Activated T-helper 1 cell treated with anti-CD3 and anti-CD28 coated beads, Interleukin-12 subunit alpha, Interleukin-12 subunit beta, Interleukin-2, Interleukin-4 antibody, amounts not matched to agents 30 ng/mL and 10 ng/mL and 1 ng/mL, durations not matched to agents 14 hours and 24 hours and 36 hours (primary cell): ENCODE measurements at regions of chr6 and their contacts with region 1.

Region 1: GRCh38 chr6:128520436-128521281 is at the start of gene PTPRK:
- DNase-seq: peak; percentile 81
- H3K4me3 Mint-ChIP-seq: peak within 1 kb of the TSS; percentile 93
- H3K27ac Mint-ChIP-seq: peak within 1 kb of the TSS; percentile 86
- H3K4me1 Mint-ChIP-seq: peaks cover 23% of the 10 kb centered on the region
- H3K27me3 Mint-ChIP-seq: peaks cover 76% of the 10 kb centered on the region
- total RNA-seq, gene PTPRK: 3.1 and 3.2 TPM in 2 replicates

Region 2: DNA sequence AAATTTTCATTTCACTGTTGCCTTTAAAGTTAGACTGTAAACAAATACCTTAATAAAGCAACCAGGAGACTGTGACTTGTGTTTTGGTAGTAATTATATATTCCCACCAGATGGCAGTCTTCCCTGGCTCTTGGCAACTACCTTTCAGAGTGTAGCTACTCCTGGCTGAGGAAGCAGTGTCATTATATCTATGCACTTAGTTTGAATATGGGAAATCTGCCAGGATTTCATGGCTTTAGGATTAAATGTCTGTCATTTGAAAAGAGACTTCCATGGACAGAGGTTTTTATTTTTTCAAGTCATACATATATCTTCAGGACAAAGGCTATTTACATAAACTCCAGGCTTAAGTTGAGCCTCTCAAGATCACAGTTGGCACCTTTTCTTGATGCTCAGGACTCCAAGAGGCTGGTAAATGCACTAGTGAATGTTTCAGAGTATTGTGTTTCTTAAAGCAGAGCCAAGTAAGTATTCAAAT is 783.6 kb before region 1 on chr6:
- intact Hi-C with region 1: loop called (anchors 1 kb)
- DNase-seq: peak; percentile 4
- H3K4me3 Mint-ChIP-seq: no peak overlapping the region
- H3K27ac Mint-ChIP-seq: peak overlapping the region; percentile 29
- H3K4me1 Mint-ChIP-seq: peaks cover 15% of the 10 kb centered on the region
- H3K27me3 Mint-ChIP-seq: no peaks in the 10 kb centered on the region

Region 3: GRCh38 chr6:127900935-127901334 is 619.7 kb before region 1 on chr6 and contains the start of gene THEMIS:
- intact Hi-C with region 1: loop called (anchors 2 kb)
- DNase-seq: peak; percentile 43
- H3K4me3 Mint-ChIP-seq: peak within 1 kb of the TSS; percentile 91
- H3K27ac Mint-ChIP-seq: peak within 1 kb of the TSS; percentile 96
- H3K4me1 Mint-ChIP-seq: peaks cover 66% of the 10 kb centered on the region
- H3K27me3 Mint-ChIP-seq: no peaks in the 10 kb centered on the region
- total RNA-seq, gene THEMIS: 10.6 and 11.3 TPM in 2 replicates

Region 4: DNA sequence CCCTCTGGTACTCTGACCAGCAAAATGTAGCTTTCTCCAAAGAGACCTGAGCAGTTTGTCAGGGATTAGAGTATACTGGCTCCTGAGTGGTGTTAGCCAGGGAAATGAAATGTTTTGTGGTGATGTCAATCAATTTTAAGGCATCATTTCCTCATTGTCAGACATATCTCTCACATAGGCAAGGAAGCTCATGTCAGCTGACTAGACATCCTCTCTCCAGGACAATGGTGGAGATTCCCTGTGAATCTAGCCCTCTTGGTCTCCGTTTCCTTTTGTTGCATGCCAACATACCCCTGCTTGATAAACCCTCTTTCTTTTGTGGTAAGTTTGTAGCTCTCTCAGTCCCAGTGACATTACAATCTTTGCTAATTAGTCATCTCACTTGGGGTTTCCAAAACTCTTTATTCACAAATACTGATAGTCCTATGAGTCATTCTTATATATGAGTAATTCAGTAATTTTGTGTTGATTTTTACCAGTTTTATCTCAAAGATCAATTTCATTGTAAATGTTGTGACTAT is 135.4 kb after region 1 on chr6:
- intact Hi-C with region 1: loop called (anchors 1 kb)
- DNase-seq: no peak
- H3K4me3 Mint-ChIP-seq: no peak overlapping the region
- H3K27ac Mint-ChIP-seq: peak overlapping the region; percentile 25
- H3K4me1 Mint-ChIP-seq: no peaks in the 10 kb centered on the region
- H3K27me3 Mint-ChIP-seq: no peaks in the 10 kb centered on the region

Region 5: DNA sequence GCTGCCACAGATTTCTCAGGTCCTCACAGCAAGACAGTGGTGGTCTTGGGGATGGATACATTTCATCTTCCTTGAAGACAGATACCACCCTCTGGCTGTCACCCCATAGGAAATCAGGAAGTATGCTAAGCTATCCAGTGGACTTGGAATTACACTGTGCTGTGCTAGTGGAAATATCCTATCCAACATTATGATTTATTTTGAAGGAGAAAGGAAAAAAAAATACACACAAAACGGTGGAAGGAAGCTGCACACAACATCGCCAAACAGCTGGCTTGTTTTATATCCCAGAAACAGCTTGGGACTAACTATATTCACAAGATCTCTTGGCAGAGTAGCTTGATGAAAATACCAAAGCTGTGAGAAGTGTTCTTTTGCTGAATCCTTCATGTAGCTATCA is 619.9 kb after region 1 on chr6:
- intact Hi-C with region 1: no loop called
- DNase-seq: no peak
- H3K4me3 Mint-ChIP-seq: no peak overlapping the region
- H3K27ac Mint-ChIP-seq: no peak overlapping the region
- H3K4me1 Mint-ChIP-seq: no peaks in the 10 kb centered on the region
- H3K27me3 Mint-ChIP-seq: peaks cover 2% of the 10 kb centered on the region